WTC11 (cell line): ENCODE measurements at regions of chr22 and their contacts with region 1.

Region 1: DNA sequence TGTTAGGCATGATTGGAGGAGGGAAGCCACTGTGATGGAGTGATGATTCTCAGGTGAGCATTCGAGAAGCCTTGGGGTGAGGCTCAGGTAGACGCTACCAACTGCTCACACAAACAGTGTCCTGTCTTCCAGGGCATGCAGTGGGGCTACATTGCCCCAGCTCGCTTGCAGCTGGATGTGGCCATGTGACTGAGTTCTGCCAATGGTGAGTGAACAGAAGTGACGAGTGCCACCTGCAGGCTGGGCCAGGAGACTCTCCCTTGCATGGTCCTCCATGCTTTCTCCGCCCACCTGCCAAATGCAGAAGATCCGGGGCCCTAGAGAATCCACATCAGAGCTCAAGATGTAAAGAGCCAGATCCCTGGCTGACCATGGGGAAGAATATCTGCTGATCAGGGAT is 195.9 kb downstream of the BCR start:
- DNase-seq: peak; percentile 64
- ATAC-seq: peak; percentile 99
- H3K4me3 Mint-ChIP-seq: no peak overlapping the region
- H3K27ac Mint-ChIP-seq: no peak overlapping the region
- H3K4me1 Mint-ChIP-seq: no peaks in the 10 kb centered on the region
- H3K27me3 Mint-ChIP-seq: peaks cover 57% of the 10 kb centered on the region
- CTCF ChIP-seq: no peak

Region 2: DNA sequence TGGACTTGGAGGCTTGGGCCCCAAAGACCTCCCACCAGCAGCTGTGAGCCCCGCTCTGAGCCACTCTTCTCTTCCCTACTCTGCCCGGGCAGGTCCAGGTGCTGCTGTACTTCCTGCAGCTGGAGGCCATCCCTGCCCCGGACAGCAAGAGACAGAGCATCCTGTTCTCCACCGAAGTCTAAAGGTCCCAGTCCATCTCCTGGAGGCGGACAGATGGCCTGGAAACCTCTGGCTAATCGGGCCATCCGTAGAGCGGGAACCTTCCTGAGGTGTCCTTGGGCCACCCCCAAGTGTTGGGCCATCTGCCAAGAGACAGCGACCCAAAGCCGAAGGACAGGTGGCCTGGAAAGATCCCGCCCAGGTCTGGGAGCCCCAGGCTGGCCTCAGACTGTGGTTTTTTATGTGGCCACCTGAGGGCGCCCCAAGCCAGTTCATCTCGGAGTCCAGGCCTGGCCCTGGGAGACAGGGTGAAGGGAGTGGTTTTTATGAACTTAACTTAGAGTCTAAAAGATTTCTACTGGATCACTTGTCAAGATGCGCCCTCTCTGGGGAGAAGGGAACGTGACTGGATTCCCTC is 60.8 kb before region 1 on chr22:
- CTCF ChIA-PET with region 1: interaction called, 11 read pairs
- POLR2A ChIA-PET with region 1: no interaction called
- DNase-seq: peak; percentile 83
- ATAC-seq: peak; percentile 78
- H3K4me3 Mint-ChIP-seq: no peak overlapping the region
- H3K27ac Mint-ChIP-seq: peak overlapping the region; percentile 57; the same call in 1 of the 2 replicates
- H3K4me1 Mint-ChIP-seq: peaks cover 3% of the 10 kb centered on the region
- H3K27me3 Mint-ChIP-seq: no peaks in the 10 kb centered on the region
- CTCF ChIP-seq: peak; percentile 50; the same call in 1 of the 2 replicates

Region 3: DNA sequence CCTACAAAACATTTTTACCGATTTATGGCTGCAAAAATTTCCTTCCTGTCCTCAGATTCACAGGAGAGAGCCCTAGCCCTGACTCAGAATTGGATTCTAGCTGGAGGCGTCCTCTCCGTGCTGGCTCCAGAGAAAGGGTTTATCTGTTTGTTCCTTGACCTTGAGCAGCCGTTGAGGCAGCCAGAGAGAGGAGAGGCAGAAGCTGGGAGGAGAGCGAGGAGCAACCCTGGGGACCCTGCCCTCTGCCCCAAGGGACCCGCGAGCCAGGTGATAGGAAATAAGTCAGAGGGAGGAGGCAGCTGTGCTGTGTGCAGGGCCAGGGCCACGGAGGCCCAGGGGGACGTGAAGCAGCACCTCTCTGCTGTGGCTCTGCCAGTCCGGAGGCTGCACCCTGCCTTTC is 128.3 kb after region 1 on chr22:
- CTCF ChIA-PET with region 1: no interaction called
- POLR2A ChIA-PET with region 1: no interaction called
- DNase-seq: no peak
- ATAC-seq: no peak
- H3K4me3 Mint-ChIP-seq: no peak overlapping the region
- H3K27ac Mint-ChIP-seq: no peak overlapping the region
- H3K4me1 Mint-ChIP-seq: peaks cover 15% of the 10 kb centered on the region
- H3K27me3 Mint-ChIP-seq: peaks cover 28% of the 10 kb centered on the region
- CTCF ChIP-seq: no peak